Activated T-helper 2 cell treated with anti-CD3 and anti-CD28 coated beads, Interferon-gamma antibody, Interleukin-2, Interleukin-4, amounts not matched to agents 10 μg/mL and 5 μg/mL and 100 μg/mL, durations not matched to agents 14 hours and 24 hours and 36 hours (primary cell): ENCODE measurements at regions of chr9 and their contacts with region 1.

Region 1: GRCh38 chr9:101727612-101728524 is 10.6 kb downstream of the GRIN3A start:
- DNase-seq: no peak
- H3K4me3 Mint-ChIP-seq: no peak overlapping the region
- H3K27ac Mint-ChIP-seq: no peak overlapping the region
- H3K4me1 Mint-ChIP-seq: no peaks in the 10 kb centered on the region
- H3K27me3 Mint-ChIP-seq: peaks cover 2% of the 10 kb centered on the region

Region 2: DNA sequence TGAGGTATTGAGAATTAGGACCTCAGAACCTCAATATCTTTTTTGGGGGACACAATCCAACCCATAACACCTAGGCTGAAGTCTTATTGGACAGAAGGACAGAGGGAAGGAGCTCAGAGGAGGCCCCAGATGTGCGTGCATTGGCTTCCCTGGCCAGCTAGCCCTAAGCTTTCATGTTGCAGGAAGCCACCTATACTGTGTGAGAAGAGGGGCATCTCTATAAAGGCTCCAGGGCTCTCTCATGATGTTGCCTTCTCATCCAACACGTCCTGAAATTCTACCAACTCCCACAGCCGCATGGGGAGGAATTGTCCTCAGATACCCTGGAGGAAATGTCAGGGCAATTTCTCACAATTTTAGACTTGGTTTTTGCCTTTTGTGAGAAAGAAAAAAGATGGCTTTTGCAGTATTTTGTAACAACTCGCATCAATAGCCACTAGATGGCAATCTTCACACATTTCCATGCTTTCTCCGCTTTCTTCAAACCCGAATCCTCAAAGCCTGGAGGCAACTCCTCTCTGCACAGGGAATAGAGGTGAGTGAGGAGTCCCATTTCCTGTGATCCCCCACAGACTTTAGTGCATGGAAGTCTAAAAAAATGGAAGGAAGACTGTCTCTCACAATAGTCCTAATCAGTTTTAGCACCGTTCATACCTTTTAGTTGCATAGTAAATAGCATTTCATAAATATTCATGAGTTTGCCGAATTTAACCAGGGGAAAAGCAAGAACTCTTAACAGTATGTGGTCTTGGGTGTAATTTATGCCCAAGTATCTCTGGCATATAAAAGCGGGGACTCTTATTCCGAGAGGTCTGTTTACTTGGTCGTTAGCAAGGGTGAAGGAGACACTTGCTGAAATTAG is 125.7 kb before region 1 on chr9:
- intact Hi-C with region 1: loop called (anchors 2 kb)
- DNase-seq: no peak
- H3K4me3 Mint-ChIP-seq: no peak overlapping the region
- H3K27ac Mint-ChIP-seq: no peak overlapping the region
- H3K4me1 Mint-ChIP-seq: peaks cover 3% of the 10 kb centered on the region
- H3K27me3 Mint-ChIP-seq: peaks cover 7% of the 10 kb centered on the region